HCT116 (cell line): ENCODE measurements at regions of chr9 and their contacts with region 1.

Region 1: DNA sequence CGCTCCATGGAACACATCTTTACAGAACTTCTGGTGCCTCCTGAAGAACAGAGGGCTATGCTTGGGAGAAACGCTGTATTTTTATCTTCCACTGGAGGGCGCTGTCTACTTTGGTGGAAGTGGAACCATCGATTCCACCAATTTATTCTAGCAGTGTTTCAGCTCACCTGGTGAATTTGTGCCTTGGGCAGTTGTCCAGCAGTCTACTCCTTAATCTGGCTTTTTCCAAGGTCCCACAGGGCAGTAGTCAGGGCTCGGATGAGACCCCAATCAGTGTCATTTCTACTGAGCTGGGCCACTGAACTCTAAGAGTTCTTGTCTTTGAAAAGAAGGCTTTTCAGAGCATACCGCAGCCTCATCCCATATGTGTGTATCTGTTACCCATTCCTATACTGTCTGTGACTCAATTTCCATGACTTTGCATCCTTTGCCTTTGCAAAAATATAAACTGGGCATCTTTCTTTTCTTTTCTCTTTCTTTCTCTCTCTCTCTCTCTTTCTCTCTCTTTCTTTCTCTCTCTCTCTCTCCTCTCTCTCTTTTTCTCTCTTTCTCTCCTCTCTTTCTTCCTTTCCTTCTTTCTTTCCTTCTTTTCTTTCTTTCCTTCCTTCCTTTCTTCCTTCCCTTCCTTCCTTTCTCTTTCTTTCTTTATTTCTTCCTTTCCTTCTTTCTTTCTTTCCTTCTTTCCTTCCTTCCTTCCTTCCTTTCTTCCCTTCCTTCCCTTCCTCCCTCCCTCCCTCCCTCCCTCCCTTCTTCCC is 138.4 kb upstream of the ZNF618 start:
- DNase-seq: peak; percentile 49
- ATAC-seq: peak; percentile 80
- H3K4me3 ChIP-seq: no peak overlapping the region
- H3K27ac ChIP-seq: no peak overlapping the region
- H3K4me1 ChIP-seq: peaks cover 3 to 11% of the 10 kb centered on the region in 2 experiments; a peak in 3 of 4 replicates
- H3K27me3 ChIP-seq: peaks cover 20% of the 10 kb centered on the region
- CTCF ChIP-seq: peak; percentile 86 to 89 (median 87)
- POLR2A ChIP-seq: no peak
- RAD21 ChIP-seq: peak; percentile 92

Region 2: GRCh38 chr9:113624721-113625120 is 113.0 kb before region 1 on chr9:
- CTCF ChIA-PET with region 1: no interaction called
- POLR2A ChIA-PET with region 1: no interaction called
- RAD21 ChIA-PET with region 1: no interaction called
- intact Hi-C with region 1: no loop called
- DNase-seq: no peak
- ATAC-seq: no peak
- H3K4me3 ChIP-seq: no peak overlapping the region
- H3K27ac ChIP-seq: no peak overlapping the region
- H3K4me1 ChIP-seq: peaks cover 38 to 41% of the 10 kb centered on the region in 2 experiments
- H3K27me3 ChIP-seq: no peaks in the 10 kb centered on the region
- CTCF ChIP-seq: no peak
- POLR2A ChIP-seq: no peak
- RAD21 ChIP-seq: no peak

Region 3: DNA sequence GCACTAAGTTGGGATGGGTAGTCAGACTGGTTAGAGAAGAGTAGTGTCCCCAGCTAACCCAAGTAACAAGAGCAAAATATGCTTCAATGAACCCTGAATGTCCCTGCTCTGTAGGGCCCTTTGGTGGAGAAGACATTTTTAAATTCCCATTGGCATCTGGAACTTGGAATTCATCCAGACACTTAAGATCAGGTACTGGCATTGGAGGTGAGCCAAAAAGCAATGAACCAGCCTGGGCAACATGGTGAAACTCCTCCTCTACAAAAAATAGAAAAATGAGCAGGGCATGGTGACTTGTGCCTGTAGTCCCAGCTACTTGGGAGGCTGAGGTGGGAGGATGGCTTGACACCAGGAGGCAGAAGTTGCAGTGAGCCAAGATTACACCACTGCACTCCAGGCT is 79.5 kb after region 1 on chr9:
- CTCF ChIA-PET with region 1: no interaction called
- POLR2A ChIA-PET with region 1: no interaction called
- RAD21 ChIA-PET with region 1: no interaction called
- intact Hi-C with region 1: no loop called
- DNase-seq: no peak
- ATAC-seq: no peak
- H3K4me3 ChIP-seq: no peak overlapping the region
- H3K27ac ChIP-seq: no peak overlapping the region
- H3K4me1 ChIP-seq: no peaks in the 10 kb centered on the region
- H3K27me3 ChIP-seq: no peaks in the 10 kb centered on the region
- CTCF ChIP-seq: no peak
- POLR2A ChIP-seq: no peak
- RAD21 ChIP-seq: no peak

Region 4: GRCh38 chr9:113876151-113876992 is 138.7 kb after region 1 on chr9 and contains the start of gene ZNF618:
- CTCF ChIA-PET with region 1: no interaction called
- POLR2A ChIA-PET with region 1: no interaction called
- RAD21 ChIA-PET with region 1: no interaction called
- intact Hi-C with region 1: loop called (anchors 5 kb)
- DNase-seq: no peak
- ATAC-seq: peak; percentile 86
- H3K4me3 ChIP-seq: peak within 1 kb of the TSS; percentile 69 to 76
- H3K27ac ChIP-seq: peak within 1 kb of the TSS; percentile 37; the same call in 1 of the 2 replicates
- H3K4me1 ChIP-seq: peaks cover 8% of the 10 kb centered on the region in 2 experiments
- H3K27me3 ChIP-seq: no peaks in the 10 kb centered on the region
- CTCF ChIP-seq: peak in 2 of 3 experiments; percentile 29 to 60; a peak in 3 of 6 replicates
- POLR2A ChIP-seq: no peak
- RAD21 ChIP-seq: peak; percentile 41; the same call in 1 of the 2 replicates
- total RNA-seq, gene ZNF618: 13.5 TPM

Region 5: GRCh38 chr9:113963017-113963620 is 225.4 kb after region 1 on chr9:
- CTCF ChIA-PET with region 1: interaction called, 3 read pairs
- POLR2A ChIA-PET with region 1: no interaction called
- RAD21 ChIA-PET with region 1: no interaction called
- intact Hi-C with region 1: loop called (anchors 1 kb)
- DNase-seq: peak; percentile 22
- ATAC-seq: peak; percentile 78
- H3K4me3 ChIP-seq: no peak overlapping the region
- H3K27ac ChIP-seq: no peak overlapping the region
- H3K4me1 ChIP-seq: peaks cover 0 to under 1% of the 10 kb centered on the region in 2 experiments; a peak in 1 of 4 replicates
- H3K27me3 ChIP-seq: no peaks in the 10 kb centered on the region
- CTCF ChIP-seq: peak; percentile 34 to 86 (median 85); a peak in 5 of 6 replicates
- POLR2A ChIP-seq: no peak
- RAD21 ChIP-seq: peak; percentile 54

Region 6: DNA sequence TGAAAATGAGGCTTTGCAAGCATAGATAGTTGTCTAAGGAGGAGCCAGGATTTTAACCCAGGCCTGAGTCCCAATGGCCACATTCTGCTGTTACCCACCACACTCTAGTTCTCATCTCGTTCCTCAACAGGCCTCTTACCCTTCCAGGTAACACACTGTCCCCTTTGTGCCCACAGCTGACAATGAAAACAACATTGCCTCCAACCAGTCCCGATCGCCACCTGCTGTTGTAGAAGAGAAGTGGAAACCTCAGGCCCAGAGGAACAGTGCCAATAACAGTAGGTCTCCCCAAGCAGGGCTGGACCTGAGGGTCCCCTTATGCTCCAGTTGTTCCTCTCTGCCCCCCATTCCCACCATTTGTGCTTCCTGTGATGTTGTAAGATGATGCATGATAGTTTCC is 310.0 kb after region 1 on chr9:
- CTCF ChIA-PET with region 1: interaction called, 15 read pairs
- POLR2A ChIA-PET with region 1: no interaction called
- RAD21 ChIA-PET with region 1: no interaction called
- intact Hi-C with region 1: loop called (anchors 1 kb)
- DNase-seq: peak; percentile 16
- ATAC-seq: peak; percentile 92
- H3K4me3 ChIP-seq: no peak overlapping the region
- H3K27ac ChIP-seq: no peak overlapping the region
- H3K4me1 ChIP-seq: no peaks in the 10 kb centered on the region
- H3K27me3 ChIP-seq: no peaks in the 10 kb centered on the region
- CTCF ChIP-seq: peak; percentile 55 to 63 (median 61)
- POLR2A ChIP-seq: no peak
- RAD21 ChIP-seq: peak; percentile 65

Region 7: GRCh38 chr9:114102484-114102883 is 364.8 kb after region 1 on chr9:
- CTCF ChIA-PET with region 1: interaction called, 3 read pairs
- POLR2A ChIA-PET with region 1: no interaction called
- RAD21 ChIA-PET with region 1: no interaction called
- intact Hi-C with region 1: loop called (anchors 1 kb)
- DNase-seq: no peak
- ATAC-seq: no peak
- H3K4me3 ChIP-seq: no peak overlapping the region
- H3K27ac ChIP-seq: no peak overlapping the region
- H3K4me1 ChIP-seq: peaks cover 0 to 7% of the 10 kb centered on the region in 2 experiments; a peak in 2 of 4 replicates
- H3K27me3 ChIP-seq: no peaks in the 10 kb centered on the region
- CTCF ChIP-seq: no peak
- POLR2A ChIP-seq: no peak
- RAD21 ChIP-seq: no peak

Region 8: GRCh38 chr9:114291064-114291474 is 553.4 kb after region 1 on chr9:
- CTCF ChIA-PET with region 1: no interaction called
- POLR2A ChIA-PET with region 1: no interaction called
- RAD21 ChIA-PET with region 1: no interaction called
- intact Hi-C with region 1: loop called (anchors 5 kb)
- DNase-seq: peak; percentile 51
- ATAC-seq: peak; percentile 85
- H3K4me3 ChIP-seq: no peak overlapping the region
- H3K27ac ChIP-seq: no peak overlapping the region
- H3K4me1 ChIP-seq: no peaks in the 10 kb centered on the region
- H3K27me3 ChIP-seq: no peaks in the 10 kb centered on the region
- CTCF ChIP-seq: peak; percentile 80 to 95 (median 95)
- POLR2A ChIP-seq: no peak
- RAD21 ChIP-seq: peak; percentile 95